Activated T-helper 1 cell treated with anti-CD3 and anti-CD28 coated beads, Interleukin-12 subunit alpha, Interleukin-12 subunit beta, Interleukin-2, Interleukin-4 antibody, amounts not matched to agents 30 ng/mL and 10 ng/mL and 1 ng/mL, durations not matched to agents 14 hours and 24 hours and 36 hours (primary cell): ENCODE measurements at regions of chr12 and their contacts with region 1.

Region 1: DNA sequence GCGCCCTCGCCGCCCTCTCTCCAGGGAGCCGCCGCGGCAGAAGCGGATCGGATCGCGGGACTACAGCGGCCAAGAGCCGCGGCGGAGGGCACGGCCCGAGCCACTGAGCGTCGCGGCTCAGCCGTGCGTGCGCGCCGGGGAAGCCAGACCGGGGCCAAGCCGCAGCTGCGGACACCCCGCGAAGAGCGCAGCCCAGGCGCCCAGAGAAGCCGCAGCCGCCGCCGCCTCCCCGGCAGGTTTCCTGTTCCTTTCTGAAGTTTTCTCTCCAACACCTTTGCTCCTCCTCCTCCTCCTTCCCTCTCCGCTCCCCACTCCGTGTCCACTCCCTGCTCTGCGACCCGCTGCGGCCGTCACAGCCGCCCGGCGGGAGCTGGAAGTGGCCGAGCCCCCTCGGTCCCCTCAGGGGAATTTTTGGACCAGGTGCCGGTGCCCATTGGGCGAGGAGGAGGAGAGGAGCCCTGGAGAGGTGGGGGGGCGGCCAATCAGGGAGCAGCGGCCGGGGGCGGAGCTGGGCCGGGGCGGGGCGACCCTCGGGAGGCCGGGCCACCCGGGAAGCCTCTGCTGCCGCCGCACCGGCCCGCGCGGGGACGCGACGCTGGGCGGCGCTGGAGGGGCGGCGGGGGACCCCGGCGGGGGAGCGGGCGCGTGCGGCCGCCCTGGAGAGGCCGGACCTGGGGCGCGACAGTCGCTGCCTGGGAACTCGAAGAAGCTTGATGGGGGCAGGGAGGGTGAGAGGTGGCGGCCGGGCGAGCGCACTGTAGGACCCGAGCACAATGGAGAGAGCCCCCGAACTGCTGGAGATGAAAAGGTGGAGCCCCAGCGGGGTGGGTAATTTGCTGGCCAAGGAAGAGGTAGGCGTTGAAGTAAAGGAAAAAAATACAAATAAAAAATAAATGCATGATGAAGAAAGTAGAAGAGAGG is at the start of gene ITPR2:
- DNase-seq: peak; percentile 89
- H3K4me3 Mint-ChIP-seq: peak within 1 kb of the TSS; percentile 99
- H3K27ac Mint-ChIP-seq: peak within 1 kb of the TSS; percentile 98
- H3K4me1 Mint-ChIP-seq: peaks cover 42% of the 10 kb centered on the region
- H3K27me3 Mint-ChIP-seq: peaks cover 5% of the 10 kb centered on the region
- total RNA-seq, gene ITPR2: 33.0 and 34.2 TPM in 2 replicates

Region 2: DNA sequence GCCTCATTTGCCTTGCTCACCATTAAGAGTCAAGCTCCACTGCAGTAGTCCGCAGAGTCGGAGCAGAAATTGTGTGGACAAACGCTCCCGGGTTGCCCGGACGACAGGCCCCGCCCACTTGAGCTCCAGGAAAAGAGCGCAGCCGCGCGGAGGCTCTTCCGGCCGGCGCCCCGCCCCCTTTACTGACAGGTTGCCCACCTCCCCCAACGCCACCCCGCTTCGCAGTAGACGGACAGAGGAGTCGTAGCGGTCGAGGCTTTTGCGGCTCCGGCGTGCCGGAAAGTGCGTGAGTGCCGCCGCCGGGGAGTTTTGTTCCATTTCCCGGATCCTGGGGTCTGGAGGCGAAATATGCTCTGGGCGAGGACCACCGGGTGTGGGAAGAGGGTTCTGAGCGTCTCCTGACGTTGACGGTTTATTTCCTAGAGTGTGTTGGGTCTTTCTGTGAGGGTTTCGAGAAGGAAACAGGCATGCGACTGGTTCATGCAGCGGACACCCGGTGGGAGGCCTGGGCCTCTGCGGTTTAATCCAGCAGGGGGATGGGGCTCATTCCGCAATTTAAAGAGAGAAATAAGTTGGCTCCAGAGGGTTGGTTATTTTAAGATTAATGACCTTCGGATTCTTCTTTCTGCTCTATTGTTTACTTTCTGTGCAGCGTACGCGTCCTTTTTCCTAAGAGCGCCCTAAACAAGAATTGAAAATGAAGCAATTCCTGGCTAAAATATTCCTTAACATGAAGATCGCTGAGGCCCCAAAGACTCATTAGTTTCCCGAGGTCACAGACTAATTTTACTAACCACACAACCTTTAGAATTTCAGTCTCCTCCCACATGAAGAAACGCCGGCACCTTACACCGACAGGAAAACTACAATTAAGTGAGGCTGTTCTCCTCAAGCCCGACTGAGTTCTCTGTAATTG is 1637.8 kb before region 1 on chr12 and contains the starts of genes DNAI7 and ETFRF1:
- intact Hi-C with region 1: loop called (anchors 1 kb)
- DNase-seq: peak; percentile 92
- H3K4me3 Mint-ChIP-seq: peak within 1 kb of the TSS; percentile 98
- H3K27ac Mint-ChIP-seq: peak within 1 kb of the TSS; percentile 95
- H3K4me1 Mint-ChIP-seq: peaks cover 23% of the 10 kb centered on the region
- H3K27me3 Mint-ChIP-seq: peaks cover 2% of the 10 kb centered on the region
- total RNA-seq, gene DNAI7: 0.23 TPM in 1 of 2 replicates, not detected in the other
- total RNA-seq, gene ETFRF1: 9.7 and 10.4 TPM in 2 replicates

Region 3: DNA sequence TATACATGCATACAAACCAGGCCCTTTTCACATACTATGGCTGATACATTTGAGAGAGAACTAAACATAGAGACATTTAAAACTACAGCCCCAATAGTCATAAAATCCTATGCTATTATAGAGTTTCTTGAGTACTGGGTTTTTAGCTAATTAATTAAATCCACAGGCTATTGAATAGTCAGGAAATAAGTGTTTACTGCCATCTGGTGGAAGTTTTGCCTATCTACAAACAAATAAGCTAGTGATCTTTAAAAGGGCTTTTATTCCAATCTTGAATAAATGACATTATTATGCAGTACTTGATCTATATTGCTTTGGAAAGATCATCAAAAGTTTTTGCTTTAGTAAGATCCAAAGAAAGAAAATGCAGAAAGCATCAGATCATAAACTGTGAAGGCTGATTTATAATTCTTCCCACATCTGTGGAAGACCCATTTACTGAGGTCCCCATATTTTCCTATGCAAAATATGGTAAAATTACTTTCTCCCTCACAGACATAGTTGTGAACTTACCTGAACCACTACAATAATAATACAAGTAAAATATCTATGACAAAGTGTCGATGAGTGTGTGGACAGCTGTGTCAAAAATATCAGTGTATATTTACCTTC is 131.4 kb before region 1 on chr12:
- intact Hi-C with region 1: loop called (anchors 5 kb)
- DNase-seq: no peak
- H3K4me3 Mint-ChIP-seq: no peak overlapping the region
- H3K27ac Mint-ChIP-seq: no peak overlapping the region
- H3K4me1 Mint-ChIP-seq: peaks cover 9% of the 10 kb centered on the region
- H3K27me3 Mint-ChIP-seq: no peaks in the 10 kb centered on the region

Region 4: DNA sequence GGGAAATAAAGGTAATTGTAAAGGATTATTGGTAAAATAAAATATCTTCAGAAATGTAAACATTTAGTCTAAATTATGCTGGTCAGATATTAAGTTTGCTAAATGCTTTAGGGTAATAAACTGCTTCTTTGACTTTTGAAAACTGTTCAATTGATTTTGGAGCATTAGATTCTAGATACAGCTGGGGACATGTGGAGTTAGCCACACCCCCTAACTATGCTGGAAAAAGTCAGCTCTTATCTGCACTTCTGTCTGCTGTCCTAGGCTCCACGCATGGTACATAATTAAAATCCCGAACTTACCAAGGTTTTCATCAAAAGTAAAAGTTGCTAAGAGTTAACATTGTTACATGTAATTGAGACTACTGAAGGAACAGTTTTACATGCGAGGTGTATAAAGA is 78.9 kb before region 1 on chr12:
- intact Hi-C with region 1: no loop called
- DNase-seq: no peak
- H3K4me3 Mint-ChIP-seq: no peak overlapping the region
- H3K27ac Mint-ChIP-seq: no peak overlapping the region
- H3K4me1 Mint-ChIP-seq: peaks cover 21% of the 10 kb centered on the region
- H3K27me3 Mint-ChIP-seq: no peaks in the 10 kb centered on the region

Region 5: DNA sequence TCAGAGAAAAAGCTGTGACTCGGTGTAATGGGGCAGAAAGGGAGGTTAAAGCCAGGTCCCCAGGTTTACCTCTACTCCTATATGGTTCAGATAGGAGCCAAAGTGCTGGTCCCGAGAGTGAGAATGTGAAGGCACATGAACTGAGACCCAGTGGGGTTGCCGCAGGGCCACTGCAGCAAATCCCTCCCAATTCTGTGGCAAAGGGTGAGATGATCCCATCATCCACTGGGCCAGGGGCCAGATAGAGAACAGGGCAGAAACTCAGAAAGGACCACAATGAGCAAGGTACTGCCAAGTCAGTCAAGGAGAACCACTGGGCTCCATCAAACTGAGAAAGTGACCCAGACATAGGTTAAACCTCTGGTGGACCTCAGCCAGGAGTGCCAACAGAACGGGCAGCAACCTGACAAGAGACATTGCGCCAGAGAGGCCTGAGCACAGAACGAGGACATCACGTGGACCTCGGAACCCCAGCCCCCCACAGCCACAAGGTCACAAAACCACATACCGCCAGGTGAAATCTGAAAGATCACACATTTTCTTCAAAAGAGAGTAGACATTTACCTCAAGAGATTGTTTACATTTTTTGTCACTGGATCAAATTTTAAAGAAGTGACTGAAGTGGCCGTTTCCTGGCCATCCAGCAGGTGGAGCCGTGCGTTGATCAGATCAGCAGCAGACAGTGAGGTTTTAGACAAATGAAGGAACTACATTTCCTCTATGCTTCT is 20.4 kb after region 1 on chr12:
- intact Hi-C with region 1: loop called (anchors 1 kb)
- DNase-seq: peak; percentile 50
- H3K4me3 Mint-ChIP-seq: no peak overlapping the region
- H3K27ac Mint-ChIP-seq: no peak overlapping the region
- H3K4me1 Mint-ChIP-seq: no peaks in the 10 kb centered on the region
- H3K27me3 Mint-ChIP-seq: peaks cover 14% of the 10 kb centered on the region

Region 6: DNA sequence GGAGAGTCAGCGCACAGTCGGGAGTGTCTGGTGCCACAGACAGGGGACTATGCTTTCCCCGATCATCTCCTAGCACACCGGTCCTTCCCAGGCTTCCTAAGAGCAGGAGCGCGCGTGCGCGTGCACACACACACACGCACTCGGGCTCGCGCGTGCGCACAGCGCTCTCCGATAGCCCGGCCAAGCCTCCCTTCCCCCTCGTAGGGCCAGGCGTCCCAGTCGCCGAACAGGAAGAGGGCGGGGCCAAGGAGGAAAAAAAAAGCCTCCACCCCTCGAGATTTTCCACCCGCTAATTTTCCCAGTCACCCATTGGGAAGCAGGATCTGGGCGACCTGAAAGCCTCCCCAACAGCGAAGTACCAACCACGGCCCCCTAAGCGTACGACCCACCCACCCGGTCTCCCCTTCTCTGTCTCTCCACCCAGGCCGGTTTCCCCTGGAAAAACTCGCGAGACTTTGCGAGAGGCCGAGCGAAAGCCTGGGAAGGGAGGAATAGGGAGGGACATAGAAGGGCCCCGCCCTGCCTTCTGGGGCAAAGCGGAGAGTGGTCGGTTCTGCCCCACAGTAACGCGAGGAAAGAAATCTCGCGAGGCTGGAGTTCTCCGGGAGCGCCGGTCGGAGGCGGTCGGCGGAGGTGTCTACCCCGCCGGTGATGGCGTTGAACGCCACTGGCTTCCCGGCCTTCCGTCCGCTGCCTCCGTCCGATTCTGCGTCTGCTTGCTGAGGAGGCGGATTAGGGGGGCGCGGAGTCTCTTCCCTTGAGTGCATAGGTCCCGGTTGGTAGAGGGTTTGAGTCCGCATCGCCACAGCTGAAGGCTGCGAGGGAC is 105.0 kb after region 1 on chr12 and contains the starts of genes FGFR1OP2 and INTS13:
- intact Hi-C with region 1: loop called (anchors 1 kb)
- DNase-seq: peak; percentile 97
- H3K4me3 Mint-ChIP-seq: peak within 1 kb of the TSS; percentile 96
- H3K27ac Mint-ChIP-seq: peak within 1 kb of the TSS; percentile 96
- H3K4me1 Mint-ChIP-seq: peaks cover 82% of the 10 kb centered on the region
- H3K27me3 Mint-ChIP-seq: no peaks in the 10 kb centered on the region
- total RNA-seq, gene FGFR1OP2: 48.3 and 49.9 TPM in 2 replicates
- total RNA-seq, gene INTS13: 43.8 and 52.2 TPM in 2 replicates

Region 7: DNA sequence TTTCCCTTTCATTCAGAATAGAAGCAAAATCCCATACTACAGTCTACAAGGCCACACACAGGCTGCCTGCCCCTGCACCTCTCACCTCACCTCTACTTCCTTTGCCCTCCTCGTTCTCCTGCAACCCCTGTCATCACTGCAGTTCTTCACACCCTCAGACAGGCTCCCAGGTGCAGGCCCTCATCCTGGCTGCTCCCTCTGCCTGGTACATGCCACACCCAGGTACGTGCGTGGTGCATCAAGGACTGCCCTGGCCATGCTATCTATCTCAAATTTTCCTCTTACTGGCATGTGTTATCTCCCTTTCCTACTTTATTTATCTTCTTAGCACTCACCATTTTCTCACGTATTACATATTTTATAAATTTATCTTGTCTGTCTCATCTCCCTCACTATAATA is 156.8 kb after region 1 on chr12:
- intact Hi-C with region 1: no loop called
- DNase-seq: no peak
- H3K4me3 Mint-ChIP-seq: no peak overlapping the region
- H3K27ac Mint-ChIP-seq: no peak overlapping the region
- H3K4me1 Mint-ChIP-seq: no peaks in the 10 kb centered on the region
- H3K27me3 Mint-ChIP-seq: no peaks in the 10 kb centered on the region

Region 8: GRCh38 chr12:27498149-27498548 is 665.1 kb after region 1 on chr12:
- intact Hi-C with region 1: loop called (anchors 1 kb)
- DNase-seq: peak; percentile 16
- H3K4me3 Mint-ChIP-seq: peak overlapping the region; percentile 3
- H3K27ac Mint-ChIP-seq: peak overlapping the region; percentile 76
- H3K4me1 Mint-ChIP-seq: peaks cover 53% of the 10 kb centered on the region
- H3K27me3 Mint-ChIP-seq: no peaks in the 10 kb centered on the region